AG04450 (cell line): ENCODE measurements at regions of chr17 and their contacts with region 1.

Region 1: DNA sequence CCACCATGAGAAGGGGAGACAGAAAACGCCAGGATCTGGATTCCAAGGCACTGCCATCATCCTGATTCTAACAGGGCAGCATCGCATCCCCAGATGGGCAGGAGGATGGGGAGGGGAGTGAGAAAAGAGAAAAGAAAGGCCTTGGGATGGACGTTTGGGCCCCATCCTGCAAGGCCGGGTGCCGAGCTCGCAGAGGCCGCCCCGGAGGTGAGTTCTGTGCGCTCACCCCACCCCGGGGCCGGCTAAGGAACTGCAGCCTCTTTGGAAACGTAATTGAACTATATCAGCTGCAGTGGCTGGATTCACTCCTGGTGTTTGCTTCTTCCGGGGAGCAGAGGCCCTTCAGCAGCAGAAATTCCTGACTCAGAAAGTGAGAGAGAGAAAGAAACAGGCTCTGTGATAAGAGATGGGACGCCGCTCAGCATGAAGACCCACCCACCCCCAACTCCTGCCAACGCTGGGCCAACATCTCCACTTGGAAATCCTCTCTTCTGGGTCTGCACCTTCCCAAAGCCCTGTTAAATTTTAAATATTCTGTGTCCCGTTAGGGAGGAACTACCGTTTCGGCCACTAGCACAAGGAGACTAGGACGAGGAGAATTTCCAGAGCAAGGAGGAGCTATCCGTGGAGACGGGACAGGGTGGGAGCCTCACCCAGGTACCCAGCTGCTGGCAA is 8.5 kb upstream of the SSTR2 start:
- DNase-seq: peak; percentile 27
- H3K4me3 ChIP-seq: no peak overlapping the region
- H3K27ac ChIP-seq: no peak overlapping the region
- H3K27me3 ChIP-seq: peaks cover 15% of the 10 kb centered on the region
- CTCF ChIP-seq: peak; percentile 85

Region 2: GRCh38 chr17:73166731-73167581 is 10.7 kb after region 1 on chr17:
- CTCF ChIA-PET with region 1: interaction called, 14 read pairs
- POLR2A ChIA-PET with region 1: no interaction called
- DNase-seq: no peak
- H3K4me3 ChIP-seq: peak overlapping the region; percentile 57
- H3K27ac ChIP-seq: no peak overlapping the region
- H3K27me3 ChIP-seq: peaks cover 60% of the 10 kb centered on the region
- CTCF ChIP-seq: no peak